ENCODE measurements at regions of chr10 and their contacts with region 1.

Region 1: DNA sequence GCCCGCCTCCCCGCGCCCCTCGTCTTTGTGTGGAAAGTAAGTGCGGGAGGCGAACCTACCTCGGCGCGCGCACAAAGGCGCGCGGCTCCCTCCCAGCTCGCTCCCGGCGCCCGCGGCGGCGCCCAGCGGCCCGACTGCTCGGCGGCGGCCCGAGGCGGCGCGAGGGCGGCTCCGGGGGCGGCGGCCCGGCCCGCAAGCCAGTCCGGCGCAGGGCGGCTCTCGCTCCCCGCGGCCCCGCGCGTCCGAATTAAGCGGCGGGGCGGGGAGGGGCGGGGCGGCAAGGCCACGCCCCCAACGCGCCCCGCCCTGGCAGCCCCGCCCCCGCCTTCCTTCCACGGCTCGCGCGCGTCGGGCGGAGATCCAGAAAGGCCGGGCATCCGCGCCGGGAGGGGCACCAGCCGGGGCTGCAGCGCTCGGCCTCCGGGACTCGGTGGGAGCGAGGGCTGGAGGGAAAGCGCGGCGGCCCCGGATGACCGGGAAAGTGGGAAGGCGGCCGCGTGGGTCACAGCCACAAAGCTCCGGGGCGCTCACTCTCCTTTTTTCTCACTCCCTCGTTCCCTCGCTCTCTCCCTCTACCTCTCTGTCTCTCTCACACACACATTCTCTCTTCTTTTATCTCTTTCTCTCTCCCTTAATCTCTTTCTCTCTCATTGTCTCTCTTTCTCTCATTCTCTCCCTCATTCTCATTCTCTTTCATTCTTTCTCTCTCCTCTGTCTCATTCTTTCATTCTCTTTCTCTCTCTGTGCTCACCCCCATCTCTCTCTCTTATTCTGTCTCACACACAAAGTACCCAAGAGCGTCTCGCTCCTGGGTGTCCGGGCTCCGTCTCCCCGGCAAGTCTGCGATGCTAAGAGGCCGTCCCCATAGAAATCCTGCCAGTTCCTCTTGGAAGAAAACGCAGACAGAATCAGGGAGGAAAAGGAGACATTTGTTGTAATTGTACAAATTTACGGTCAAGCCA is 170.2 kb downstream of the FAM107B start:
- DNase-seq: peak; percentile 79
- H3K4me3 Mint-ChIP-seq: peak overlapping the region; percentile 85
- H3K27ac Mint-ChIP-seq: peak overlapping the region; percentile 81
- H3K4me1 Mint-ChIP-seq: peaks cover 47% of the 10 kb centered on the region
- H3K27me3 Mint-ChIP-seq: no peaks in the 10 kb centered on the region
- CTCF ChIP-seq: no peak

Region 2: DNA sequence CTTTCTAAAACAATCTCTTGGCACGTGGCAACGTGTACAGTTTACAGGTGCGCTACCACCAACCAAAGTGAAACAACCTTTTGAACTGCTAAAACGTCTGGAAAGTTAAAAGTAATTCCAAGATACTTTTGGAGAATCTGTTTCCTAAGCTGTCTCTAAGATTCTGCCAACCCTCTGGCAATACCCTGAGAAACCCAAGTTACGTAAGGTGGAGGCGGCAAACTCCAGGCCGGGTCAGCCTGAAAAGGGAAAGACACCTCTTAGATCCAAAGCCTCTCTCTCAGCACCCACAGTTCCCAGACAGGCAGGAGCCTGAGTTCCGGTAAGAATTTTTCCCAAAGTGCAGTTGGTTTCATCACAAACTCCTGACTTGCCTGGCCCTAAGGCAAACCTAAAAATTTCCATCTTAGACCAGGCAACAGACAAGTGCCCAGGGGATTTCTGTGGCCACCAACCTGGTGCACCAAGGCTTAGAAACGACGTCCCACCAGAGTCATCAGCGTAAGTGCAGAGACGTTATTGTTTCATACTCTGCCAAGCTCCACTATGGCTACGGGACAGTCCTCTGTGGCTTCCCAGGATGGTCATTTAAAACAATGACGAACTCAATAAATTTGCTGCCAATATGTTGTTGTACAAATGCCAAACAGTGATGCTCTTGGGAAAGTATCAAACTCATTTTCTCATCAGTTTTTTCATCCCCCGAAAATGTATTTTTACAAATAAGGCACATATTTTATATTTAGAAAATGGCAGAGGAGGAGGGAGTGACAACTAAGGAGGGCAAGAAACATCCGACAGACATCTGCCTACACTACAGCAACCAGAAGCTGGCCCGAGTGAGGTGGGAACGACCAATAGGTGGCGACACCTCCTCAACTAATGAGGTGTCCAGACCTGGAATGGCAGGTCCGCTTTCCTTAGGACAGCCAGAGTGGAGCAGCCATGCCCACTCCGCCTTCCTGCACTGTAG is 67.9 kb before region 1 on chr10:
- CTCF ChIA-PET with region 1: no interaction called
- intact Hi-C with region 1: loop called (anchors 5 kb)
- DNase-seq: peak; percentile 75
- H3K4me3 Mint-ChIP-seq: no peak overlapping the region
- H3K27ac Mint-ChIP-seq: no peak overlapping the region
- H3K4me1 Mint-ChIP-seq: peaks cover 44% of the 10 kb centered on the region
- H3K27me3 Mint-ChIP-seq: no peaks in the 10 kb centered on the region
- CTCF ChIP-seq: peak; percentile 53

Region 3: GRCh38 chr10:14556285-14556956 is 48.0 kb before region 1 on chr10:
- CTCF ChIA-PET with region 1: no interaction called
- intact Hi-C with region 1: loop called (anchors 5 kb)
- DNase-seq: peak; percentile 61
- H3K4me3 Mint-ChIP-seq: peak overlapping the region; percentile 44
- H3K27ac Mint-ChIP-seq: peak overlapping the region; percentile 76
- H3K4me1 Mint-ChIP-seq: peaks cover 90% of the 10 kb centered on the region
- H3K27me3 Mint-ChIP-seq: no peaks in the 10 kb centered on the region
- CTCF ChIP-seq: peak; percentile 33

Region 4: DNA sequence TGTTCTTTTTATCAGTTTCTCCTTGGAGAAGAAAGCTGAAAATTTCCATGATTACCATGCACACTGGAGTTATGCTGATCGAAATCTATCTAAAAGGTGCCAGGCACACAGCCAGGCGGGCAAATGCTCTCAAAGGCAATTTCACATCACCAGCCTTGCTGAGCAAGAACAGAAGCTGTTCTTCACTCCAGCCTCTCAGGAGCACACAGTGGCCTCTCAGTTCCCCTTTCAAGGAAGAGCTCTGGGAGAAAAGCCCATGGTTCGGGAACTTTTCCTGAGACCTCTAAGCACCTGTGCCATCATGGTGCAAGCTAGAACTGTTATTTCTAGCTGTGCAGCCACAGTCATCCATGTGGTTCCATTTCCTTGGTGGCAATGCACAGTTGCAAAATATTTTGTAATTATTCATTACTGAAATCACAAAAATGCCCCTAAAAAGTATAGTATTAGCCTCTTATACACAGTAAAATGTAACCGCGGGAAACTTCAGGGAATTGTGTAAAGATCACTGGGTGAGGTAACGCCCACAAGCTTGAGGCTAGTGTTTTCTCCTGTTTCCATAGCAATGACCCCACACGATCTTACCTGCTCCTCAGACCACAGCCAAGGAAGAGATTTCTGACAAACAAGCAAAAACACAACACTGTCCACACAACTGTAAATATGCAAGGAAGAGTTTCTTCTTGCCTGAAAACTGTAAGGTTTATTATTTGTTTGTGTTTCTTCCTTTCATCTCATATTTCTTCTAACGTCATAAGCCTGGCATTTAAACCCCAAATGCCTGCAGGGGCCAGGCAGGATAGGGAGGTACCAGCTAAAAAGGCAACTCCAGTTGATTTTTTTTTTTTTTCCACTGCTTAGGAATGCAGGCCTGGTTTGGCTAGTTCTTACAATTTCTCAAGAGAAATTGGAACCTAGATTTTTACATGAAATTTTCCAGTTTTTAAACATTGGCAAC is 49.1 kb after region 1 on chr10:
- CTCF ChIA-PET with region 1: no interaction called
- intact Hi-C with region 1: loop called (anchors 5 kb)
- DNase-seq: peak; percentile 74
- H3K4me3 Mint-ChIP-seq: peak overlapping the region; percentile 43
- H3K27ac Mint-ChIP-seq: peak overlapping the region; percentile 94
- H3K4me1 Mint-ChIP-seq: peaks cover 61% of the 10 kb centered on the region
- H3K27me3 Mint-ChIP-seq: no peaks in the 10 kb centered on the region
- CTCF ChIP-seq: no peak

Region 5: DNA sequence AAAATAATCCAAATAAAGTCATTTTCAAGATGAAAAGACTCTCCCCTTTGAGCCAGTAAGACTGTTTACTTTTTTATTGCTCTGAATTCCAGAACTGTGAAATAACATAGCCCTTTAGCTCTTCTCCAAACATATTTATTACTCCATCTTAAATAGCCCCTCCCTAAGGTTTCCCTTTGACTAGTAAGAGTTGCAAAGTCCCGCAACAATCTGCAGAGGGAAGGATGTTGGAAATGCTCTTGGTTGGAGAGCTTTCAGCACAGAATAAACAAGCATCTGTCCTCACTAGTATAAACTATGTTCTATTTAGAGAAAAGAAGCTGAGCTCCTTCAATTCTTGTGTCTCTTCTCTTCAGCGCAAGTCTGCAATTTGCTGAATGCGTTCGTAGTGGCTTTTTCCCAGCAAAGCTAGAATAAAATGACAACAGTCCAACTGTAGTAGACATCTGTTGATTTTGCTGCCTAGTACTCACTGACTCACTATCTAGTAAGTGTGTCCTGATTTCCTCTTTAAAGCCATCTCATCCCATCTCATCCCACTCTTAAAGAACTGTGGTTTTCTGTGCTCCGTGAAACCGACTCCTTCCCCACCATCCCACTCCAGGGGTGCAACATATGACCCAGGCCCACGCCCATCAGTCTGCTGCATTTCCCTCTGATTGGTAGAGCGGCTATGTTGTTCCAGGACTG is 66.2 kb after region 1 on chr10:
- CTCF ChIA-PET with region 1: no interaction called
- intact Hi-C with region 1: loop called (anchors 5 kb)
- DNase-seq: no peak
- H3K4me3 Mint-ChIP-seq: no peak overlapping the region
- H3K27ac Mint-ChIP-seq: no peak overlapping the region
- H3K4me1 Mint-ChIP-seq: peaks cover 68% of the 10 kb centered on the region
- H3K27me3 Mint-ChIP-seq: no peaks in the 10 kb centered on the region
- CTCF ChIP-seq: no peak

Region 6: DNA sequence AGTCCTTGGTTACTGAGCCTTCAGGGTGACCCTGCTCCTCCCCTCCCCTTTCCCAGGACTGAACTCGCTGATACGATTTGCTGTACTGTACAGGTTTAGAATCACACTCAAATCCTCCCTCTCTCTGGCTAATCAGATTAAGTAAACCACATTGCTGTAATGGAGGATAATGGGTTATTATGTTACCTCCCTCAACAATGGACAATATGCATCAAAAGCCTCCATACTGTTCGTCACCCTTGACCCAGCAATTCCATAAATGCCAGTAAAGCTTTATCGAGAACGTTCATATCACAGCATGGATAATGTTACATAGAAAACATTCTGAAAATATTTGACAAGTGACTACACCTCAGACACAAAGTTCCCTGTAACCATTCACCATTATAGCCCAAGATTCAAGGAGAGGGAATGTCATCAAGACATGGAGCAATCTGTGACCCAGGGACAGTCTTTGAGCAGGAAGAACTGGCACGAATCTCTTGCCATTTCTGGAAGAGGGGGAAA is 108.6 kb after region 1 on chr10:
- CTCF ChIA-PET with region 1: no interaction called
- intact Hi-C with region 1: loop called (anchors 1 kb)
- DNase-seq: peak; percentile 57
- H3K4me3 Mint-ChIP-seq: peak overlapping the region; percentile 46
- H3K27ac Mint-ChIP-seq: peak overlapping the region; percentile 92
- H3K4me1 Mint-ChIP-seq: peaks cover 23% of the 10 kb centered on the region
- H3K27me3 Mint-ChIP-seq: no peaks in the 10 kb centered on the region
- CTCF ChIP-seq: no peak

Region 7: DNA sequence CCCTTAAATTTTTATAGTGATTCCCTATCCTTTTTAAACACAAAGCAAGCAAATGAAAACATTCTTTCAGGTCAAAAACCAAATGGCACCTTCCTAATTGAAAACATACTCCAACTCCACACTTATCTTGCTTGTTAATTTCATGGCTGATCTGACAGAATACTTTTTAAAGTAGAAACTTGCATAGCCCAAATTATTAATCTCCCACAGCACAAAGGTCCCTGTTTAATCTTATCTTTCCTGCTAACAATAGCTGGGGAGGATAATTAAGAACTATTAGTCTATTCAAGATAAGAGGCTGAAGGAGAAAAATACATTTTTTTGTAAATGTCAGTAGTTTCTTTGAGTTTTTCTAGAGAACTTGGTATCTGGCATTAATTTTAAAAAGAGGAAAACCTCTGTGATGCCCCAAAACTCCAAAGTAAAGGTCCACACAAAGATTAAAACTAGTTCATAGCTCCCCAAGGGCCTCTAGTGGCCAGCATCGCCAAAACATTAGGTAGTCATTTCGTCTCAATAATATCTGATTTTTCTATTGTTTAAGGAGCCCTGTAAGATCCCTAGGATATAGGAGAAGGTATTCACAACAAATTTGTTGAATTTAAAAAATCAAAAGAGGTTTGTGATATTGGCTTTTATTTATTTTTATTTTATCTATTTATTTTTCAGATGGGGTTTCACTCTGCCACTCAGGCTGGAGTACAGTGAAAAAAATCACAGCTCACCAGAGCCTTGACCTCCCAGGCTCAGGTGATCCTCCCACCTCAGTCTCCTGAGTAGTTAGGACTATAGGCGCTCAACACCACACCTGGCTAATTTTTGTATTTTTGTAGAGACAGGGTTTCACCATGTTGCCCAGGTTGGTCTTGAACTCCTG is 218.7 kb after region 1 on chr10:
- CTCF ChIA-PET with region 1: interaction called, 4 read pairs
- intact Hi-C with region 1: loop called (anchors 2 kb)
- DNase-seq: peak; percentile 49
- H3K4me3 Mint-ChIP-seq: no peak overlapping the region
- H3K27ac Mint-ChIP-seq: peak overlapping the region; percentile 38
- H3K4me1 Mint-ChIP-seq: peaks cover 26% of the 10 kb centered on the region
- H3K27me3 Mint-ChIP-seq: no peaks in the 10 kb centered on the region
- CTCF ChIP-seq: no peak